ENCODE measurements at regions of chr4 and their contacts with region 1.

Region 1: GRCh38 chr4:38310446-38311043 is 350.3 kb downstream of the PTTG2 start:
- DNase-seq: no peak
- H3K4me3 ChIP-seq: no peak overlapping the region
- H3K27ac ChIP-seq: no peak overlapping the region
- H3K4me1 ChIP-seq: peaks cover 37% of the 10 kb centered on the region
- H3K27me3 ChIP-seq: no peaks in the 10 kb centered on the region
- CTCF ChIP-seq: no peak

Region 2: GRCh38 chr4:38237139-38237538 is 73.4 kb before region 1 on chr4:
- CTCF ChIA-PET with region 1: no interaction called
- dilution Hi-C with region 1: no loop called
- in situ Hi-C with region 1: no loop called
- intact Hi-C with region 1: loop called (anchors 5 kb)
- DNase-seq: peak; percentile 90
- H3K4me3 ChIP-seq: no peak overlapping the region
- H3K27ac ChIP-seq: no peak overlapping the region
- H3K4me1 ChIP-seq: peaks cover 10% of the 10 kb centered on the region
- H3K27me3 ChIP-seq: no peaks in the 10 kb centered on the region
- CTCF ChIP-seq: peak in 1 of 2 donors; percentile 18